Activated CD4-positive, alpha-beta T cell treated with anti-CD3 and anti-CD28 coated beads, Interleukin-2, amount 10 ng/mL, durations not matched to agents 24 days and 14 days (primary cell): ENCODE measurements at regions of chr16 and their contacts with region 1.

Region 1: DNA sequence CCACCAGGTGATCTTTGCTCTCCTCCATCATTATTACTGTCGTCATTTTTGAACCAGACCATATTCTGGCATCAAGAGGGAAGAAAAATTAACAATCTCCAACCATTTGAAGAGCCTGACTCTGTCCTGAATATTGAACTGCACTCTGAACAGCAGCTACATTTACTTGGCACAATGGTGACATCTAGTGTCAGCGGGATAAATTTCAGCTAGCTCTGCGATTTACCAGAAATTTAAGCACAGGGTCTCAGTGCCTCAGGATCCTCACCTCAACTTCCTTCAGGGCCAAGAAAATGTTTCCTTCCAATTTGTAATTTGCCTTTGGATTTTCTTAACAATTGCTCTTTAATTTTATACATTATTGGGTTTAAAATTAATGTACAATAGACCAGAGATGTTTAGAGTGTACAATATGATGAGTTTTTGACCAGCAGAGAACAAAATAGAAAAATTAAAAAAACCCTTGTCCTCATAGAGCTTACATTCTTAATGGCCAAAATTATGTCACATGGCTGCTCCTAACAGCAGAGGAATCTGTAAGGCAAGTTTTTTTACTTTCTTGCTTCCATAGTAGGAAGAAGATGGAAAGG is 10.7 kb upstream of the ZNF19 start:
- DNase-seq: peak; percentile 86
- H3K4me3 Mint-ChIP-seq: no peak overlapping the region
- H3K27ac Mint-ChIP-seq: no peak overlapping the region
- H3K4me1 Mint-ChIP-seq: no peaks in the 10 kb centered on the region
- H3K27me3 Mint-ChIP-seq: no peaks in the 10 kb centered on the region

Region 2: GRCh38 chr16:71441348-71441781 is 58.5 kb before region 1 on chr16:
- intact Hi-C with region 1: loop called (anchors 2 kb)
- DNase-seq: peak; percentile 71
- H3K4me3 Mint-ChIP-seq: no peak overlapping the region
- H3K27ac Mint-ChIP-seq: no peak overlapping the region
- H3K4me1 Mint-ChIP-seq: no peaks in the 10 kb centered on the region
- H3K27me3 Mint-ChIP-seq: no peaks in the 10 kb centered on the region

Region 3: DNA sequence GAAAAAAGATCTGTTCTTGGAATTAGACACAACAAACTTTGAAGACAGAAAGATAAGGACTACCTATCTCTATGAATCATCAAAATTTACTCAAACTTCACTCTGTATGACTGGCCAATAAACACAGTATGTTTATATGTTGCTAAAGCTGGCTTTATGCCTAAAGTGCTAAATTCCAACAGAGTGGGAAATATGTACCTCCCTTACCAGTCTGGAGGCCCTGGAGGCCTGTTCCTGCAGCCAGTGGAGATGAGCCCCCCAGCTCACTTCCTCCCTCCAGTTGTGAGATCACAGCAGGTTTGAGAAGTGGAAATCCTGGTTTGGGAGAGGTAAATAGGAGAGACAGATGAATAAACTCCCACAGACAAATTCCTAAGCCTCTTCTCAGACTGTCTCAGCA is 46.8 kb before region 1 on chr16:
- intact Hi-C with region 1: no loop called
- DNase-seq: no peak
- H3K4me3 Mint-ChIP-seq: no peak overlapping the region
- H3K27ac Mint-ChIP-seq: no peak overlapping the region
- H3K4me1 Mint-ChIP-seq: no peaks in the 10 kb centered on the region
- H3K27me3 Mint-ChIP-seq: no peaks in the 10 kb centered on the region